Activated CD4-positive, alpha-beta T cell treated with anti-CD3 and anti-CD28 coated beads, Interleukin-2, amount 10 ng/mL, durations not matched to agents 24 days and 14 days (primary cell): ENCODE measurements at regions of chr10 and their contacts with region 1.

Region 1: DNA sequence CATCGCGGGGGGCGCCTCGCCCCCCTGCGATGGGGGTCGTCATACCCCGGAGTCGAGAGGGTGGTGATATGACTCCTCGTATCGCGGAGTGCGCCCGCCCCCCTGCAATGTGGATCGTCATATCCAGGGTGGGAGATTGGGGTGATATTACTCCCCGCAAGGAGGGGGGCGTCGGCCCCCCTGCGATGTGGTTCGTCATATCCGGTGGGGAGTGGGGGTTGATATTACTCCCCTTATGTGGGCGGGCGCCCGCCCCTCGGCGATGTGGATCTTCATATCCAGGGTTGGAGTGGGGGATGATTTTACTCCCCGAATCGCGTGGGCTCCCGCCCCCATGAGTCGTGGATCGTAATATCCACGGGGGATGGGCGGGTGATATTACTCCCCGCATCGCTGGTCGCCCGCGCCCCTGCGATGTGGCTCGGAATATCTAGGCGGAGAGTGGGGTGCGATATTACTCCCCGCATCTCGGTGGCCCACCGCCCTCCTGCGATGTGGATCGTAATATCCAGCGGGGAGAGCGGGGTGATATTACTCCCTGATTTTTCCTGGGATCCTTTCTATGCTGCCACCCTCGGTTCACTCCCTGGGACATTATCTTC is 36.9 kb downstream of the MEIG1 start:
- DNase-seq: no peak
- H3K4me3 Mint-ChIP-seq: no peak overlapping the region
- H3K27ac Mint-ChIP-seq: no peak overlapping the region
- H3K4me1 Mint-ChIP-seq: peaks cover 7% of the 10 kb centered on the region
- H3K27me3 Mint-ChIP-seq: no peaks in the 10 kb centered on the region

Region 2: DNA sequence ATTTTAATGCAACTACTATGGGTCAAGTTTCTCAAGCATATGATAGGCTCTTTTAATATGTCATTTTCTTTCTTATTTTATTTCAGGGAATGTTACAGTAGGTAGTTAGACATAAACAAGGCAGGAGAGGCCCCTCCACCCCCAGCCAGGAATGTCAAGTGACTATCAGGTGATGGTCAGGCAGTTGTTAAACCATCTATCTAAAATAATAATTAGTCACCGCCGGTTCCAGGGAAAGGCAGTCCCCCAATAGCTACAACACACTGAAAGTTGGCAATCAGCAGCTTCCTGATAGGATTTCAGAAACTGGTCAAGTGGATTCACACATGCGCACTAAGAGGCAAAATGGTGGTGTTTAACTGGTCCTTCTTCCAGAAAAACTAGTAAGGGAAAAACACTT is 57.0 kb after region 1 on chr10:
- intact Hi-C with region 1: no loop called
- DNase-seq: no peak
- H3K4me3 Mint-ChIP-seq: no peak overlapping the region
- H3K27ac Mint-ChIP-seq: no peak overlapping the region
- H3K4me1 Mint-ChIP-seq: no peaks in the 10 kb centered on the region
- H3K27me3 Mint-ChIP-seq: peaks cover 11% of the 10 kb centered on the region

Region 3: GRCh38 chr10:15106352-15107013 is 110.4 kb after region 1 on chr10:
- intact Hi-C with region 1: loop called (anchors 1 kb)
- DNase-seq: peak; percentile 90
- H3K4me3 Mint-ChIP-seq: no peak overlapping the region
- H3K27ac Mint-ChIP-seq: peak overlapping the region; percentile 20
- H3K4me1 Mint-ChIP-seq: peaks cover 6% of the 10 kb centered on the region
- H3K27me3 Mint-ChIP-seq: no peaks in the 10 kb centered on the region

Region 4: GRCh38 chr10:15370856-15371701 is 375.0 kb after region 1 on chr10 and contains the start of gene FAM171A1:
- intact Hi-C with region 1: loop called (anchors 10 kb)
- DNase-seq: peak; percentile 89
- H3K4me3 Mint-ChIP-seq: peak within 1 kb of the TSS; percentile 78
- H3K27ac Mint-ChIP-seq: peak within 1 kb of the TSS; percentile 26
- H3K4me1 Mint-ChIP-seq: peaks cover 8% of the 10 kb centered on the region
- H3K27me3 Mint-ChIP-seq: peaks cover 62% of the 10 kb centered on the region
- total RNA-seq, gene FAM171A1: 1.7 TPM in 2 replicates